Endothelial cell of umbilical vein (primary cell): ENCODE measurements at regions of chr21 and their contacts with region 1.

Region 1: DNA sequence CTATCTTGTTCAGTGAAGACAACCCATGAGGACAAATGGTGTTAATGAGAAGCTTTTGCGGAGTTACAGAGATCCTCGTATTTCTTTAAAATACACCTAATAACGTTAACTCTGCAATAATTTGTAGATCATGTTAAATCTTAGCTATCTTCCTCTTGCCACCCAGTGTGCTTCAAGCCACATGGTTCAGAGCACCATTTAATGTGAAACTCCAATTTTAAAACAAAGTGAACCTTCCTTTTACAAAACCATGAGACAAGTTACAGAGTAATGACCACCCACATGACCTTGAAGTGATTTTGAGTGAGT is 1.7 kb upstream of the KCNE2 start:
- DNase-seq: no peak
- H3K4me3 ChIP-seq: no peak overlapping the region
- H3K27ac ChIP-seq: no peak overlapping the region
- H3K4me1 ChIP-seq: no peaks in the 10 kb centered on the region
- H3K27me3 ChIP-seq: peaks cover 8 to 17% of the 10 kb centered on the region in 2 experiments
- CTCF ChIP-seq: no peak
- POLR2A ChIP-seq: no peak

Region 2: DNA sequence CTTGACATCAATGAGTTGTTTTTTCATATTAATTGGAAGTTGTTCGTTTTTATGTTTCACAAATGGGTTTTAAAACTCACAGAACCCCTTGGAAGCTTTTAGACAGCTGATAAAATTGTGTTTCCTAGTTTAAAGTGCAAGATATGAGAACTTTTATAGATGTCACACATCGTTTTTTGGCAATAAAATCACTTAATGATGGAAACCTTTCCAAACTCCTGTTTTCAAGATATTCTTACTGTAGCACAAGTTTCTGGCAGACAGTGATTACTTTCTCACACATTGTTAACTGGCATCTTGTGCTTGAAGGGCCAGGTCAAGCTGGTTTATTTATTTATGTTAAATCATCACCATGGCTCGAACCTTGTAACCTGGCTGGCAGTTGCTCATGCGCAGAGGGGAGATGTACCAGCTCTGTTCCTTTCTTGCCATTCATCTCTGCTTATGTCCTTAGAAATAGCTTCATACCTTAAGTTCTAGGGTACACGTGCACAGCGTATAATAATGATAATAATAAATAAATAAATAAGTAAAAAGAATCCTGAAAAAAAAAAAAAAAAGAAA is 263.0 kb after region 1 on chr21:
- CTCF ChIA-PET with region 1: interaction called, 34 read pairs
- POLR2A ChIA-PET with region 1: no interaction called
- dilution Hi-C with region 1: no loop called
- intact Hi-C with region 1: loop called (anchors 1 kb)
- DNase-seq: no peak
- H3K4me3 ChIP-seq: no peak overlapping the region
- H3K27ac ChIP-seq: no peak overlapping the region
- H3K4me1 ChIP-seq: no peaks in the 10 kb centered on the region
- H3K27me3 ChIP-seq: peaks cover 17 to 20% of the 10 kb centered on the region in 2 experiments
- CTCF ChIP-seq: no peak
- POLR2A ChIP-seq: no peak